Vagina (tissue), 2 donors: ENCODE measurements at regions of chr5 and their contacts with region 1.

Region 1: DNA sequence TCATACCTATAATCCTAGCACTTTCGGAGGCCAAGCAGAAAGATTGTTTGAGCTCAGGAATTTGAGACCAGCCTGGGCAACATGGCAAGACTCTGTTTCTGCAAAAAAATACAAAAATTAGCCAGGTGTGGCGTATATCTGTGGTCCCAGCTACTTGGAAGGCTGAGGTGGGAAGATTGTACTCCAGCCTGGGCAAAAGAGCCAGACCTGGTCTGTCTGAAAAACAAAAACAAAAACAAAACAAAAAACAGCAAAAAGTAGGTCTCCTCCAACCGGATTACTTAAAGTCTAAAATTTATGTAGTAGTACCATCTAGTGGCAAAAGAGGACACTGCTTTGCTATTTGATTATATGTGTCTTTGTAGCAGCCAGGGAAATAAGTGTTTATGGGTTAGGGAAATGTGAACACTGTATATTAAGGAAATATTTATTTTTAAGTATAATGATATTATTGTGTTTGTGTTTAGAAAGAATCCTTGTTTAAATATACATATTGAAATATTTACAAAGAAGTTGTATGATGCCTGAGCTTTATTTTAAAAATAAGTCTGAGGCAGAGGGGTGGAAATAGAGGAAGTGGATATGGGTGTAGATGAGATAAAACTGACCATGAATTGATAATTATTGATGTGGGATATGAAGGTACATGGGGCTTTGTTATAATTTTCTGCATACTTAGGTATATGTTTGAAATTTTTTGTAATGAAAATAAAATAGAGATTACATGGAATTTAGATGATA is 20.0 kb downstream of the APC start:
- DNase-seq: no peak
- H3K4me3 ChIP-seq: no peak overlapping the region
- H3K27ac ChIP-seq: peak overlapping the region; percentile 38
- H3K4me1 ChIP-seq: no peaks in the 10 kb centered on the region
- H3K27me3 ChIP-seq: no peaks in the 10 kb centered on the region
- CTCF ChIP-seq: peak; percentile 63 to 82 (median 76)
- POLR2A ChIP-seq: no peak

Region 2: GRCh38 chr5:112551419-112552032 is 206.1 kb before region 1 on chr5:
- intact Hi-C with region 1: loop called (anchors 5 kb)
- DNase-seq: no peak
- H3K4me3 ChIP-seq: no peak overlapping the region
- H3K27ac ChIP-seq: no peak overlapping the region
- H3K4me1 ChIP-seq: peaks cover 6% of the 10 kb centered on the region
- H3K27me3 ChIP-seq: no peaks in the 10 kb centered on the region
- CTCF ChIP-seq: peak; percentile 51 to 82 (median 76)
- POLR2A ChIP-seq: no peak

Region 3: GRCh38 chr5:112737463-112738190 is 20.0 kb before region 1 on chr5 and contains the start of gene APC:
- intact Hi-C with region 1: no loop called
- DNase-seq: peak in 1 of 2 donors; percentile 94
- H3K4me3 ChIP-seq: peak within 1 kb of the TSS; percentile 62 to 69
- H3K27ac ChIP-seq: peak within 1 kb of the TSS; percentile 64
- H3K4me1 ChIP-seq: peaks cover 17% of the 10 kb centered on the region
- H3K27me3 ChIP-seq: no peaks in the 10 kb centered on the region
- CTCF ChIP-seq: peak in 1 of 3 experiments; percentile 27
- POLR2A ChIP-seq: no peak
- total RNA-seq, gene APC: 92.8 TPM